PC-3 (cell line): ENCODE measurements at regions of chr4 and their contacts with region 1.

Region 1: DNA sequence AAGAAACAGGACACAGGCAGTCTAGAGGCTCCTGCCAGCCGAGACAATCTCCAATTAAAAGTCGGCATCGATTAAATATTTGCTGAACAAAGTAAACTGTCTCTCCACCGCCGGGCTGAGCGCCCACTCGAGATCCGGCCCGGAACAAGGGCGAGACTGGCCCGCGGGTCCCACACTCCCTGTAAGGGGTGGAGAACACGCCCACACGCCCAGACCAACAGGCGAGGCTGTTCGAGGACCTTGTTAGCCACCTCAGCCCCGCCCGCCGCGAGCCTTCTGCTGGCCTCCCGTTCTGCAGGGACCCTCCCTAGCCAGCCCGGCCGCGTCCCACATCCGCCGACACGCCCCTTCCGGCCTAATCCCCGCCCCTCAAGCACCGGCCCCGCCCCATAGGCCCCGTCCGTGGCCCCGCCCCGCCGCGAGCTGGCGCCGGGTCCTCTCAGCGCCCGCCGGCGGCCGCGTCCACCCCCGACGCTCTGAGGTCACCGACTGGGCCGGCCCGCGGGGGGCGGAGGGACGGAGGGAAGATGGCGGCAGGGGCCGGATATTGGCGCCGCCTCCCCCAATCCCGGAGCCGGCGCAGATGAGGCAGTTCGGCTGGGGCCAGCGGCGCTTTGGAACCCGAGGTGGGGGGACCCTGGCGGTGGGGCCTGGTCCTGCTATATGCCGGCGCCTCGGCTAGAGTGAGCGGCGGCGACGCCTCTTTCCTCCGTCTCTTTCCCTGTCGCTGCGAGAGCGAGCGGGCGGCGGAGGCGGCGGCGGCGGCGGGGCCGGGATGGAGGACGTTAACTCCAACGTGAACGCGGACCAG is at the start of gene SLAIN2:
- DNase-seq: peak; percentile 89
- ATAC-seq: peak; percentile 89
- H3K4me3 ChIP-seq: peak within 1 kb of the TSS; percentile 99
- H3K27ac ChIP-seq: peak within 1 kb of the TSS; percentile 88
- H3K4me1 ChIP-seq: peaks cover 46% of the 10 kb centered on the region
- H3K27me3 ChIP-seq: no peaks in the 10 kb centered on the region
- CTCF ChIP-seq: no peak
- total RNA-seq, gene SLAIN2: 12.5 and 17.6 TPM in 2 replicates

Region 2: GRCh38 chr4:48203819-48204218 is 137.4 kb before region 1 on chr4:
- CTCF ChIA-PET with region 1: no interaction called
- POLR2A ChIA-PET with region 1: no interaction called
- intact Hi-C with region 1: no loop called
- DNase-seq: no peak
- ATAC-seq: no peak
- H3K4me3 ChIP-seq: no peak overlapping the region
- H3K27ac ChIP-seq: no peak overlapping the region
- H3K4me1 ChIP-seq: no peaks in the 10 kb centered on the region
- H3K27me3 ChIP-seq: no peaks in the 10 kb centered on the region
- CTCF ChIP-seq: no peak

Region 3: GRCh38 chr4:48227659-48228058 is 113.5 kb before region 1 on chr4:
- CTCF ChIA-PET with region 1: no interaction called
- POLR2A ChIA-PET with region 1: no interaction called
- intact Hi-C with region 1: no loop called
- DNase-seq: no peak
- ATAC-seq: no peak
- H3K4me3 ChIP-seq: no peak overlapping the region
- H3K27ac ChIP-seq: no peak overlapping the region
- H3K4me1 ChIP-seq: peaks cover 18% of the 10 kb centered on the region
- H3K27me3 ChIP-seq: no peaks in the 10 kb centered on the region
- CTCF ChIP-seq: no peak

Region 4: GRCh38 chr4:48375651-48376293 is 34.6 kb after region 1 on chr4:
- CTCF ChIA-PET with region 1: interaction called, 7 read pairs
- POLR2A ChIA-PET with region 1: no interaction called
- intact Hi-C with region 1: loop called (anchors 1 kb)
- DNase-seq: peak; percentile 91
- ATAC-seq: peak; percentile 92
- H3K4me3 ChIP-seq: peak overlapping the region; percentile 31; the same call in 1 of the 2 replicates
- H3K27ac ChIP-seq: peak overlapping the region; percentile 84
- H3K4me1 ChIP-seq: peaks cover 18% of the 10 kb centered on the region
- H3K27me3 ChIP-seq: no peaks in the 10 kb centered on the region
- CTCF ChIP-seq: no peak

Region 5: DNA sequence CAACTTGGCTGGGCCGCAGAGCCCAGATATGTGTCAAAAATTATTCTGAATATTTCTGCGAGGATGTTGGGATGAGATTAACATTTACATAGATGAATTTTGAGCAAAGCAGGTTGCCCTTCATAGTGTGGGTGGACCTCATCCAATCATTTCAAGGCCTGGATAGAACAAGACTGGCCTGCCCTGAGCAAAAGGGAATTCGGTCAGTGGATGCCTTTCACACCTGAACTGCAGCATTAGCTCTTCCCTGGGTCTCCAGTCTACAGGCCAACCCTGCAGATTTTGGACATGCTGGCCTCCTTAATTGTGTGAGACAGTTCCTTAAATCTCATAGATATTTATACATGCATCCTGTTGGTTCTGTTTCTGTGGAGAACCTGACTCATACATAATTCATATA is 109.6 kb after region 1 on chr4:
- CTCF ChIA-PET with region 1: interaction called, 10 read pairs
- POLR2A ChIA-PET with region 1: no interaction called
- intact Hi-C with region 1: no loop called
- DNase-seq: no peak
- ATAC-seq: no peak
- H3K4me3 ChIP-seq: no peak overlapping the region
- H3K27ac ChIP-seq: no peak overlapping the region
- H3K4me1 ChIP-seq: no peaks in the 10 kb centered on the region
- H3K27me3 ChIP-seq: no peaks in the 10 kb centered on the region
- CTCF ChIP-seq: no peak